Pancreas (tissue), 10 donors: ENCODE measurements at regions of chr11 and their contacts with region 1.

Region 1: GRCh38 chr11:101456812-101457211 is 127.0 kb downstream of the TRPC6 start:
- DNase-seq: no peak
- ATAC-seq: peak in 3 of 4 donors; percentile 44 to 48 (median 46)
- H3K4me3 ChIP-seq: no peak overlapping the region
- H3K27ac ChIP-seq: no peak overlapping the region
- H3K4me1 ChIP-seq: no peaks in the 10 kb centered on the region
- H3K27me3 ChIP-seq: no peaks in the 10 kb centered on the region
- CTCF ChIP-seq: peak in 2 of 4 donors; percentile 11 to 16

Region 2: GRCh38 chr11:101478587-101479369 is 22.0 kb after region 1 on chr11:
- intact Hi-C with region 1: no loop called
- DNase-seq: no peak
- ATAC-seq: no peak
- H3K4me3 ChIP-seq: no peak overlapping the region
- H3K27ac ChIP-seq: no peak overlapping the region
- H3K4me1 ChIP-seq: no peaks in the 10 kb centered on the region
- H3K27me3 ChIP-seq: no peaks in the 10 kb centered on the region
- CTCF ChIP-seq: no peak

Region 3: DNA sequence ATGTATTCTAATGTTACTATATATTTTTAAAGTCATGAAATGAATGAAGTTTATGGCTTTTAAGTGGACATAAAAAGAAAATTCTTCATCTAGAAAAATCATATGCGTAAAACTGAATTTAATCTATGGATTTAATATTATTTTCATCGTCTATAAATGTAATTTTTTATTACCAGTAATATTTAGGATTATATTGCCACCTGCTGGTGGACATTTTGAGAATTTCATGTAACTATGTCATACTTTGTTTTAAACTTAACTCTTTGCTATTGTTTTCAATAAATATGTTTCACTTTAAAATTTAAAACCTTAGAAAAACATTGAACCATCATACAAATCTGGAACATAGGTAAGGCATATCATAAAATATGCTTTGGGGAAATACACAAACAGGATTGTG is 391.4 kb after region 1 on chr11:
- intact Hi-C with region 1: loop called in 1 of 3 experiments (anchors 10 kb)
- DNase-seq: no peak
- ATAC-seq: no peak
- H3K4me3 ChIP-seq: no peak overlapping the region
- H3K27ac ChIP-seq: no peak overlapping the region
- H3K4me1 ChIP-seq: no peaks in the 10 kb centered on the region
- H3K27me3 ChIP-seq: peaks cover 0 to 3% (median 0%) of the 10 kb centered on the region in 4 donors
- CTCF ChIP-seq: peak in 3 of 4 donors; percentile 17 to 34 (median 18)